Psoas muscle (tissue), 8 donors: ENCODE measurements at regions of chr6 and their contacts with region 1.

Region 1: GRCh38 chr6:31383149-31383548 is 20.2 kb upstream of the MICA start:
- DNase-seq: no peak
- ATAC-seq: no peak
- H3K4me3 ChIP-seq: no peak overlapping the region
- H3K27ac ChIP-seq: no peak overlapping the region
- H3K4me1 ChIP-seq: no peaks in the 10 kb centered on the region
- H3K27me3 ChIP-seq: peaks cover 0 to 16% (median 2%) of the 10 kb centered on the region in 3 donors
- CTCF ChIP-seq: no peak

Region 2: GRCh38 chr6:31321820-31322219 is 61.3 kb before region 1 on chr6:
- intact Hi-C with region 1: no loop called
- DNase-seq: no peak
- ATAC-seq: no peak
- H3K4me3 ChIP-seq: no peak overlapping the region
- H3K27ac ChIP-seq: no peak overlapping the region
- H3K4me1 ChIP-seq: no peaks in the 10 kb centered on the region
- H3K27me3 ChIP-seq: peaks cover 0 to 7% (median 0%) of the 10 kb centered on the region in 3 donors
- CTCF ChIP-seq: no peak

Region 3: GRCh38 chr6:31485055-31485454 is 101.9 kb after region 1 on chr6:
- intact Hi-C with region 1: loop called in 1 of 2 experiments (anchors 1 kb)
- DNase-seq: no peak
- ATAC-seq: no peak
- H3K4me3 ChIP-seq: no peak overlapping the region
- H3K27ac ChIP-seq: no peak overlapping the region
- H3K4me1 ChIP-seq: no peaks in the 10 kb centered on the region
- H3K27me3 ChIP-seq: peaks cover 0 to 13% (median 0%) of the 10 kb centered on the region in 3 donors
- CTCF ChIP-seq: no peak